ENCODE measurements at regions of chr7 and their contacts with region 1.

Region 1: GRCh38 chr7:33986941-33987588 is 81.7 kb downstream of the BMPER start:
- DNase-seq: no peak

Region 2: GRCh38 chr7:33258491-33258951 is 728.5 kb before region 1 on chr7:
- intact Hi-C with region 1: loop called in 1 of 2 experiments (anchors 5 kb)
- DNase-seq: no peak

Measured in posterior vena cava (tissue), 2 donors.